Panc1 (cell line): ENCODE measurements at regions of chr1 and their contacts with region 1.

Region 1: GRCh38 chr1:7127327-7128050 is 342.2 kb downstream of the CAMTA1 start:
- DNase-seq: no peak
- ATAC-seq: no peak
- H3K4me3 ChIP-seq: no peak overlapping the region
- H3K27ac ChIP-seq: no peak overlapping the region
- H3K4me1 ChIP-seq: no peaks in the 10 kb centered on the region
- H3K27me3 ChIP-seq: no peaks in the 10 kb centered on the region
- CTCF ChIP-seq: no peak

Region 2: GRCh38 chr1:6922096-6922931 is 205.2 kb before region 1 on chr1:
- CTCF ChIA-PET with region 1: no interaction called
- POLR2A ChIA-PET with region 1: no interaction called
- in situ Hi-C with region 1: no loop called
- intact Hi-C with region 1: no loop called
- DNase-seq: no peak
- ATAC-seq: no peak
- H3K4me3 ChIP-seq: no peak overlapping the region
- H3K27ac ChIP-seq: no peak overlapping the region
- H3K4me1 ChIP-seq: no peaks in the 10 kb centered on the region
- H3K27me3 ChIP-seq: no peaks in the 10 kb centered on the region
- CTCF ChIP-seq: no peak

Region 3: GRCh38 chr1:7097938-7098592 is 29.4 kb before region 1 on chr1:
- CTCF ChIA-PET with region 1: no interaction called
- POLR2A ChIA-PET with region 1: no interaction called
- in situ Hi-C with region 1: no loop called
- intact Hi-C with region 1: no loop called
- DNase-seq: no peak
- ATAC-seq: no peak
- H3K4me3 ChIP-seq: no peak overlapping the region
- H3K27ac ChIP-seq: no peak overlapping the region
- H3K4me1 ChIP-seq: no peaks in the 10 kb centered on the region
- H3K27me3 ChIP-seq: peaks cover 8% of the 10 kb centered on the region; the same call in 1 of the 2 replicates
- CTCF ChIP-seq: no peak

Region 4: DNA sequence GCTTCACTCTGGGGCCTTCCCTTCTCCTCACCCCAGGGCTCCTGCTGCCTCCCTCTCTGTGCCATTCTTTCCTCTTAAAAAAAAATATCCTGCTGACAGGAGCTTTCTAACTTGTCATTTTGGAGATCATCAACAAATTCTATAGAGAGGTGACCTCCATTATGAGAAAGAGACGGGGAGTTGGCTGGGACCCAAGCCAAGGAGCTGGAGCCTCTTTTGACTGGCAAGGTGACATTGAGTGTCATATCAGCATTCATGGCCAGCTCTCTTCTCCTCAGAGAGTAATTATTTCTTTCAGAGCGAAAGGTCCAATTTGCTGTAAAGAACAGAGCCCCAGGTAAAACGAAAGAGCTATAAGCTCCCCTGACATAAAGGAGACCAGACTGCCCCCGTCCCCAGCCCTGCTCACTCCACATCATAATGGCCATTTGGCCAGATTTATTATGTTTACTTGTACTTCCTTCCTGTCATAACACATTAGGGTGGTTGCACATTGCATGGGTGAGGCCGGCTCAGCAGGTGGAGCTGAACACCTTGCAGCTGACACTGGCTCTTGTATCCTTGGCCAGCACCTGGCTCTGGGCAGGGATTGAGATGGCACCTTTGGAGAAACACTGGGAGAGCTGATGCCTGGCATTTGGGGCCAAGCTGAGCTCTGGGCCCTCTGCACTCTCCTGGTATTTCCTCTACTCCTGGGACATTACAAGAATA is 239.6 kb after region 1 on chr1:
- CTCF ChIA-PET with region 1: no interaction called
- POLR2A ChIA-PET with region 1: no interaction called
- in situ Hi-C with region 1: no loop called
- intact Hi-C with region 1: no loop called
- DNase-seq: no peak
- ATAC-seq: no peak
- H3K4me3 ChIP-seq: no peak overlapping the region
- H3K27ac ChIP-seq: no peak overlapping the region
- H3K4me1 ChIP-seq: no peaks in the 10 kb centered on the region
- H3K27me3 ChIP-seq: no peaks in the 10 kb centered on the region
- CTCF ChIP-seq: no peak

Region 5: GRCh38 chr1:7437608-7438395 is 310.3 kb after region 1 on chr1:
- CTCF ChIA-PET with region 1: no interaction called
- POLR2A ChIA-PET with region 1: interaction called, 15 read pairs
- in situ Hi-C with region 1: no loop called
- intact Hi-C with region 1: no loop called
- DNase-seq: no peak
- ATAC-seq: no peak
- H3K4me3 ChIP-seq: no peak overlapping the region
- H3K27ac ChIP-seq: no peak overlapping the region
- H3K4me1 ChIP-seq: no peaks in the 10 kb centered on the region
- H3K27me3 ChIP-seq: no peaks in the 10 kb centered on the region
- CTCF ChIP-seq: no peak